IMR-90 (cell line): ENCODE measurements at regions of chr4 and their contacts with region 1.

Region 1: DNA sequence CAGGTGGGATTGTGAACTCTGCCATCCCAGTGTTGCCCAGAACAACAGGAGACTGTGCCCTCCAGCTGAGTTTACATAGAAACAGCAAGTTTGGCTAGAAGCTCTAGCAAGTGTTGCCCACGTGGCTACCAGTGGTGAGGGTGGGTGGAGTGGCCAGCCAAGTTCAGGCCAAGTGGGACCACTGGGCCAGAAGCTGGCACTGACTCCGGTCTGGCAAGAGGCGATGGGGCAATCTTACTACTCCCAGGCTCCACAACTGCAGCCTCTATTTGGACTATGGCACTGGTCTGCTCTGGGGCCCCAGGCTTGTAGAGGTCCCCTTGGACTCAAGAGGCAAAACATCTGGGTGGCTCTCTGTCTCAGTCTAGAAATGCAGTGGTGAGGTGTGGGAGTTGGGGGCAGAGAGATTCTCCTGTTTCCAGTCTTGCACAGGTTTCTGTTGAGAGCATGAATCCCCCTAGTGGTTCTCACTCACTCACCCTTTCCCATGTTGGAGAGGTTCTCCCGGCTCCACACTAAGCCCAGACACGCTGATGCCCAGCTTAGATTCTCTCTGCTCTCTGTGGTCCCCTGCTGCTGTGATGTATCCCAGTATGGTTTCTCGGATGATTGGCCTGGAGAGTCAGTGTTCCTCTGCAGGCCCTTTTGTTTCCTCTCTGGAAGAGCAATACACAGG is 615.3 kb downstream of the PDHA2 start:
- DNase-seq: no peak
- ATAC-seq: no peak
- H3K4me3 ChIP-seq: no peak overlapping the region
- H3K27ac ChIP-seq: no peak overlapping the region
- H3K4me1 ChIP-seq: no peaks in the 10 kb centered on the region
- H3K27me3 ChIP-seq: no peaks in the 10 kb centered on the region
- CTCF ChIP-seq: no peak
- POLR2A ChIP-seq: no peak
- RAD21 ChIP-seq: no peak

Region 2: DNA sequence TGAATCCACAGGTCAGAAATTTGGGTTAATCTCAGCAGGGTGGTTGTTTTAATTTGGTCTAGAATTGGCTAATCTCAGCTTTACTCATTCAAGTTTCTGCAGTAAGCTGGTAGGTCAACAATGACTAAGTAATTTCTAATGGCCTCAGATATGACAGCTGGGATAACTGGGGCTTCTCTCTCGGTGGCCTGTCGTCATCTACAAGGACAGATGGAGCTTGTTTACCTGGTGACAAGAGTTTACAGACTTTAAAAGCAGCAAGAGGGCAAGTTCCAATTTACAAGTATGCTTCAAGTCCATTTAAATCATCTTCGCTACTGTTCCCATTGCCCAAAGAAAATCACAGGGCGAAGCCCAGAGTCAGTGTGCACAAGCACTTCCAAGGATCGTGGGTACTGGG is 161.4 kb before region 1 on chr4:
- CTCF ChIA-PET with region 1: no interaction called
- POLR2A ChIA-PET with region 1: interaction called, 10 read pairs
- dilution Hi-C with region 1: no loop called
- in situ Hi-C with region 1: no loop called
- intact Hi-C with region 1: no loop called
- DNase-seq: no peak
- ATAC-seq: no peak
- H3K4me3 ChIP-seq: no peak overlapping the region
- H3K27ac ChIP-seq: no peak overlapping the region
- H3K4me1 ChIP-seq: no peaks in the 10 kb centered on the region
- H3K27me3 ChIP-seq: no peaks in the 10 kb centered on the region
- CTCF ChIP-seq: no peak
- POLR2A ChIP-seq: no peak
- RAD21 ChIP-seq: no peak

Region 3: GRCh38 chr4:96955226-96955625 is 500.0 kb after region 1 on chr4:
- CTCF ChIA-PET with region 1: no interaction called
- POLR2A ChIA-PET with region 1: no interaction called
- dilution Hi-C with region 1: no loop called
- in situ Hi-C with region 1: no loop called
- intact Hi-C with region 1: no loop called
- DNase-seq: no peak
- ATAC-seq: no peak
- H3K4me3 ChIP-seq: no peak overlapping the region
- H3K27ac ChIP-seq: no peak overlapping the region
- H3K4me1 ChIP-seq: no peaks in the 10 kb centered on the region
- H3K27me3 ChIP-seq: no peaks in the 10 kb centered on the region
- CTCF ChIP-seq: no peak
- POLR2A ChIP-seq: no peak
- RAD21 ChIP-seq: no peak